ENCODE measurements at regions of chr7 and their contacts with region 1.

Region 1: DNA sequence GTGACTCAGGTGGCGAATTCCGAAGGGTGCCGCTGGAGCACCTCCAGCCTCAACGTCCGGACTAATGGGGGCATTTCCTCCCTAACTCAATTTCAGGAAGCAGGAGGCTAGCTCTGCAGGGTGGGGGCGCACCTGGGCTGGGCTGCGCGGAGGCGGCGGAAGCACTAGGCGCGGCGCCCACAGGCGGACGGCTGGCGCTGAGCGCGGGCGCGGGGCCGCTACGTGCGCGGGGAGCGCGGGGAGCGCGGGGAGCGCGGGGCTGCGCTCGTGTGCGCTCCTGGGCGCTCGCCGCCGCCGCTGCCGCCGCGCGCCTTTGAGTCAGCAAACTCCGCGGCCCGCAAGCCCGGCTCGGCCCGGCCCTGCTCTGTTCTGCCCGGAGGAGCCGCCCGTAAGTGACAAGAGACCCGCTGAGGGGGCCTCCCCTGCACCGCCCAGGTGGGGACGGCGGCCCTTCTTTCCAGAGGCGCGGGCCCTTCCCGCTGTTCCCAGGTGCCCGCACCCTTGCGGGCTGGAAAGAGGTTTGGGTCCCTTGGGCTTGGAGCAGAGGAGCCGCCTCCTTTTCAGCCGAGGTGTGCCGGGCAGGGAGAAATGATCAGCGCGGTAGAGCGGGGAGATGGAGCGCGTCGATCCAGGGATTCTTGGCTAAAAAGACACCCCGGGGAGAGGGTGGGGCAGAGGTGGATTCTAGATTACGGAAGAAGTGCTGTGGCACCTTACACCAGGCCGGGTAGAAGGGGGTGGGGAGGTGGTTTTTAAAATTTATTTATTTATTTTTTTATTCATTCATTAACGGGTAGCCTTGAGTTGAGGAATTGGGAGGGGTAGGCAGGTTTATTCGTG is at the start of gene SNX10:
- DNase-seq: peak; percentile 76
- ATAC-seq: peak; percentile 77
- H3K4me3 Mint-ChIP-seq: peak within 1 kb of the TSS; percentile 92
- H3K27ac Mint-ChIP-seq: peak within 1 kb of the TSS; percentile 95
- H3K4me1 Mint-ChIP-seq: peaks cover 51% of the 10 kb centered on the region
- H3K27me3 Mint-ChIP-seq: no peaks in the 10 kb centered on the region
- CTCF ChIP-seq: no peak
- total RNA-seq, gene SNX10: 28.9 and 32.3 TPM in 2 replicates

Region 2: GRCh38 chr7:25968205-25968993 is 323.5 kb before region 1 on chr7:
- CTCF ChIA-PET with region 1: no interaction called
- POLR2A ChIA-PET with region 1: no interaction called
- intact Hi-C with region 1: loop called (anchors 1 kb)
- DNase-seq: peak; percentile 58
- ATAC-seq: peak; percentile 74
- H3K4me3 Mint-ChIP-seq: peak overlapping the region; percentile 58
- H3K27ac Mint-ChIP-seq: peak overlapping the region; percentile 97
- H3K4me1 Mint-ChIP-seq: peaks cover 48% of the 10 kb centered on the region
- H3K27me3 Mint-ChIP-seq: peaks cover 4% of the 10 kb centered on the region
- CTCF ChIP-seq: no peak

Region 3: DNA sequence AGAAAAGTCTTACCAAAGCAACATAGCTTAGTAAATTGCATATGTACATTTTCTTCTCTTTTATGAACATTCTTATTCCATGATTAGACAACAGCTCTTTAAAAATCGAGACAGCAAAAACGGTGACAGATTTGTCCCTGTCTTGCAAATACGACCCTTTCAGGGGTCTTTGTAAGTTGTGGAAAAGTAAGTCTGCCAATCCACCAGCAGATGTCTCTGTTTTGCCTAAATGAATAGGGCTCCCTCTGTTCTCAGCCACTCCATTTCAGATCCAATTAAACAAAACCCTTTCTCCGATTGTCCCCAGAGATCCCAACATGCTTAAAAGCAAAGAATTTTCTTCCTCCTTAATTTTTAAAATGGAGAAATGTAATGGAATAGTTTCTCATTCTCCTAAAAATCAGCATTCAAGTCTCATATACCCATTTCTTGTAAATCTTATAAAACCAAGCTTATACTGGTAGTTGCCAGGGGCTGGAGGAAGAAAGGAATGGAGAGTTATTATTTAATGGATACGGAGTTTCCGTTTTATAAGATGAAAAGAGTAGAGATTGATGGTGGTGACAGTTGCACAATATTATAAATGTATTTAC is 200.9 kb before region 1 on chr7:
- CTCF ChIA-PET with region 1: interaction called, 9 read pairs
- POLR2A ChIA-PET with region 1: no interaction called
- intact Hi-C with region 1: loop called (anchors 2 kb)
- DNase-seq: no peak
- ATAC-seq: peak; percentile 45
- H3K4me3 Mint-ChIP-seq: peak overlapping the region; percentile 7
- H3K27ac Mint-ChIP-seq: no peak overlapping the region
- H3K4me1 Mint-ChIP-seq: peaks cover 27% of the 10 kb centered on the region
- H3K27me3 Mint-ChIP-seq: no peaks in the 10 kb centered on the region
- CTCF ChIP-seq: peak; percentile 42

Region 4: GRCh38 chr7:26216049-26216448 is 75.9 kb before region 1 on chr7:
- CTCF ChIA-PET with region 1: no interaction called
- POLR2A ChIA-PET with region 1: no interaction called
- intact Hi-C with region 1: no loop called
- DNase-seq: no peak
- ATAC-seq: no peak
- H3K4me3 Mint-ChIP-seq: no peak overlapping the region
- H3K27ac Mint-ChIP-seq: no peak overlapping the region
- H3K4me1 Mint-ChIP-seq: peaks cover 11% of the 10 kb centered on the region
- H3K27me3 Mint-ChIP-seq: no peaks in the 10 kb centered on the region
- CTCF ChIP-seq: no peak

Region 5: DNA sequence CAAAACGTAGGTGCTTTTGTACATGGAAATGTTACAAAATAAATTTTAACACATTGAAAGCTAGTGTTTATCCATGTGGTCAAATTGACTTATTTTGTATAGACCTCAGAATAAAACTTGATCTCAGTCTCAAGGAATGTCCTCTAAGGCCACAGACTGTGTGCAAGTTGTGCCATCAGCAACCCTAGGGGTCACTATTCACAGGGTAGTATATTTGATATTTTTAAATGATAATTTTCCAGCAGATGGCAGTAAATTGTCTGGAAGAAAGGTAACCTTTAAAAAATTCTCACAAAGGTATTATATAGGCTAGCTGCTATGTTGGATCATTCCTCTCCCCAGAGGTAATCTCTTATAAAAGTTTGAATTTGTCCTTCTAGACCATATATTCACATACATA is 13.1 kb before region 1 on chr7:
- CTCF ChIA-PET with region 1: interaction called, 4 read pairs
- POLR2A ChIA-PET with region 1: interaction called, 3 read pairs
- intact Hi-C with region 1: loop called (anchors 1 kb)
- DNase-seq: no peak
- ATAC-seq: peak; percentile 82
- H3K4me3 Mint-ChIP-seq: no peak overlapping the region
- H3K27ac Mint-ChIP-seq: no peak overlapping the region
- H3K4me1 Mint-ChIP-seq: peaks cover 11% of the 10 kb centered on the region
- H3K27me3 Mint-ChIP-seq: peaks cover 3% of the 10 kb centered on the region
- CTCF ChIP-seq: no peak

Region 6: GRCh38 chr7:26337232-26337865 is 45.4 kb after region 1 on chr7:
- CTCF ChIA-PET with region 1: interaction called, 3 read pairs
- POLR2A ChIA-PET with region 1: interaction called, 15 read pairs
- intact Hi-C with region 1: loop called (anchors 1 kb)
- DNase-seq: no peak
- ATAC-seq: peak; percentile 68
- H3K4me3 Mint-ChIP-seq: peak overlapping the region; percentile 60
- H3K27ac Mint-ChIP-seq: peak overlapping the region; percentile 96
- H3K4me1 Mint-ChIP-seq: peaks cover 83% of the 10 kb centered on the region
- H3K27me3 Mint-ChIP-seq: no peaks in the 10 kb centered on the region
- CTCF ChIP-seq: no peak

Measured in activated B cell treated with CpG ODN at 0.5 μM for 24 hours (primary cell).